ENCODE measurements at regions of chr6 and their contacts with region 1.

Region 1: GRCh38 chr6:52284460-52285176 is at the start of gene MCM3:
- DNase-seq: peak; percentile 95
- CTCF ChIP-seq: no peak

Region 2: GRCh38 chr6:52045481-52045880 is 239.1 kb before region 1 on chr6:
- in situ Hi-C with region 1: no loop called
- DNase-seq: no peak
- CTCF ChIP-seq: no peak

Region 3: DNA sequence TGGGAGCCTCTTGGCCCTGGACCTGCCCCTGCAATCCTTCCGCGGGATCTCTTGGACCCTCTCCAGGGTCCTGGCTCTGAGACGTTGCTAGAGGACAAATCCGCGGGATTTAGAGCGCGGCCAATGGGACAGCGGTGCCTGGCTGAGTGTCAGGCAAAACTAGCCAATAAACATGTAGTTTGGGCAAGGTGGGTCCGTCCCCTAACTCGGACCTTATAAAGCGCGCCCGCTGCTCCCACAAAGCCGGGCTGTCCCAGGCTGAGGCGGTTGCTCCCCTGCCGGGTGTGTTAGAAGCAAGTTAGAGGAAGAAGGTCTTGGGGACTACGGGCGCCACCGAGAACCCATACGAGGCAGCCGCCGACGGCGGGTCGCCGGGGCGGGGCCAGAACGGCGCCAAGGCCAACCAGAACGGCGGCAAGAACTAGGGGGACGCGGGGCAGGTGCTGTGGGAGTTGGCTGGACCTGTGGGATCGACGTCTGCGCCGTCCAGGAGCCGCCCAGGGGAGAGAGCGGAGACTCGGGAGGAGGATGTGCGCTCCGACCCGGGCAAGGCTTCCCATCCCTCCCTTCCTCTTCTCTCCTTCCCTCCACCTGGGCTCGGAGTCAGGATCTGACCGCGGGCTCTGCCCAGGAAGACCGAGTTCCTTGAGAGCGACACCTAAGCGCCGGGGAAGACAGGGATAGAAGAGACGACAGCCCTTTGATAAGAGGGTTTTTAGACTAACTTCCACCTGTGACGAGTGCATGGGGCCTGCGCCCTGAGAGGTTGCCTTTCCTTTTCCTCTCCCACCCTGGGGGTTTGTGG is 379.8 kb after region 1 on chr6:
- in situ Hi-C with region 1: loop called (anchors 10 kb)
- DNase-seq: peak; percentile 96
- CTCF ChIP-seq: no peak

Measured in GM13976 (cell line).